Mucosa of descending colon (tissue), 3 donors: ENCODE measurements at regions of chr1 and their contacts with region 1.

Region 1: DNA sequence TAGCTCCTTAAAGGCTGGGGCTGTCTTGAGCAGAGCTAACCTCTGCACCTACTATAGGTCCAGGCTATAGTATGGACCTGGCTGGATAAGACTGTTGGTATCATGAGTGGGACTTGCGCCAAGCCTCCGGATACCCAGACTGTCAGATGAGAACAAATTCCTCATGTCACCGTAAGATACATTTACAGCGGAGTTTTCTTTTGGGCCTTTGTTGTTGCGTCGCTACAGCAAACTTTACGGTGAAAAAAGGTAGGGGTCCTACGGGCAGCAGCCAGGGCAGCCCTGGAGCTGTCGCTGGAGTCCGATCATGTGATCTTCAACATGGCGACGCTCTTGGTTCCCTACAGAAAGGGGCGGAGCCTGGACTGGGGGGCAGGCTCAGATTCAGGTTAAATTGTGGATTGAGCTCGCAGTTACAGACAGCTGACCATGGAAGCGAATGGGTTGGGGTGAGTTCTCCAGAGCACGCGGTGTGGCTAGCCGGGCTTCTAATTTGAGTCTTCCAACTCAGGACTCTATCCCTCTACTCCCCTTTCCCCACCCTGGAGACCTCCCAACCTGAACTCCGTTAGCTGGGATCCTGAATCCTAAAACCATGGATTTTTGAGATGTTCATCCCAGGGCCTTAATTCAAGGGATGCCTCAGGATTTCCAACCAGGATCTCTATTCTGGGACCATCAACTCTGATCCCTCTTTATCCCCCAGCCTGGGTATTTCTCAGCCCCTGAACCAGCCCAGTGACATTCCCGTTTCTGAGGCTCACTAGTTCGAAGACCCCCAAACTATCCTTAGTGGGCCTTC is at the start of gene UROD:
- DNase-seq: peak; percentile 93 to 97 (median 93)
- ATAC-seq: peak; percentile 84
- H3K4me3 ChIP-seq: peak within 1 kb of the TSS; percentile 94
- H3K4me1 ChIP-seq: peaks cover 30% of the 10 kb centered on the region
- CTCF ChIP-seq: no peak
- total RNA-seq, gene UROD: 44.8 to 69.8 (median 51.3) TPM

Region 2: DNA sequence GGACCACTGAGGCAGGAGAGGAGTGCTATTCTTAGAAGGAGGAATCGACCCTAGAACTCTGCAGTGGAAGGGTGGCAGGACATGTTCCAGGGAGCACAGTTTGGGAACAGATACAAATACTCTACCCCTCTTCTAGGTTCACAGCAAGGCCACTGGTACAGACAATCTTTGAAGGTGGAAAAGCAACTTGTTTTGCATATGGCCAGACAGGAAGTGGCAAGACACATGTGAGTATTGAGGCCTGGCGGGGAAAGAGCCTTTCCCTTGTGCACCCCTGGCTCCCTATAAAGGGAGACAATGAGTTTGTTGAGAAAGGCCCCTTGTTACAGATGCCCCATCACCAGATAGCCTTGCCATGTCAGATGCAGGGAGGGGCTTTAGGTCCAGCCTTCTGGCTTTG is 254.6 kb before region 1 on chr1:
- intact Hi-C with region 1: no loop called
- DNase-seq: no peak
- ATAC-seq: no peak
- H3K4me3 ChIP-seq: no peak overlapping the region
- H3K4me1 ChIP-seq: no peaks in the 10 kb centered on the region
- CTCF ChIP-seq: no peak

Region 3: DNA sequence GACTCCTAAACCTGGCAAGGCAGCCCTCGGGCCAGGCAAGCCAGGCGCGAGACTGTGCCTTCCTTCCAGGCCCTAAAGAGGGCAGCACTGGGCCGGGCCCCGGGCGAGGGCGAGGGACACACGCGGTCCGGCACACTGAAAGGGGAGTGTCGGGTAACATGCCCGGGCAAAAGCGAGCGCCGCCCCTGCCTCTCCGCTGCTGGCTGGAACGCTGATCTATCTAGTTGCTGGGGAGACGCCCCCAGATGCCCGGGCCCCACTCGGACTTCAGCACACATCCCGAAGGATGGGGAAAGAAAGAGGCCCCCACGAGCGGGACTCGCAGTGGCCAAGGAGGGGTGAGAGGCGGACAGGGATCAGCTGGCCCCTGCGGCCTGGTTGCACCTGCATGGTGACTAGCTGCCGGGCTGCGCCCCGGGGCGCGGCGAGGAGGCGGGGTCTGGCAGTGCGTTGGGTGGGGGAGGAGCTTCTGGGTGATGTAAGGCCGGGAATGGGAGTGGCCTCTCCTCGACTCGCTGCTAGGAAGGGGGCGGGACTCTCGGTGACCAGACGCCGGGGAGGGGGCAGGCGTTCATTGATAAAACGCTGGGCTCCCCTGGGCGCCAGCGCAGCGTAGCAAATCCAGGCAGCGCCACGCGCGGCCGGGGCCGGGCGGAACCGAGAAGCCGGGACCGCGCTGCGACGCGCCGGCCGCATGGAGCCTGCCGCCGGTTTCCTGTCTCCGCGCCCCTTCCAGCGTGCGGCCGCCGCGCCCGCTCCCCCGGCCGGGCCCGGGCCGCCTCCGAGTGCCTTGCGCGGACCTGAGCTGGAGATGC is 212.1 kb before region 1 on chr1 and contains the start of gene PLK3:
- intact Hi-C with region 1: loop called in 1 of 2 experiments (anchors 10 kb)
- DNase-seq: peak; percentile 98 to 99 (median 99)
- ATAC-seq: peak; percentile 96
- H3K4me3 ChIP-seq: peak within 1 kb of the TSS; percentile 57
- H3K4me1 ChIP-seq: peaks cover 11% of the 10 kb centered on the region
- CTCF ChIP-seq: peak; percentile 98
- total RNA-seq, gene PLK3: 6.4 to 14.5 (median 12.0) TPM

Region 4: GRCh38 chr1:45230540-45230939 is 218.5 kb after region 1 on chr1:
- intact Hi-C with region 1: loop called in 1 of 2 experiments (anchors 5 kb)
- DNase-seq: peak in 2 of 3 donors; percentile 49 to 51
- ATAC-seq: peak; percentile 80
- H3K4me3 ChIP-seq: no peak overlapping the region
- H3K4me1 ChIP-seq: no peaks in the 10 kb centered on the region
- CTCF ChIP-seq: peak; percentile 21

Region 5: DNA sequence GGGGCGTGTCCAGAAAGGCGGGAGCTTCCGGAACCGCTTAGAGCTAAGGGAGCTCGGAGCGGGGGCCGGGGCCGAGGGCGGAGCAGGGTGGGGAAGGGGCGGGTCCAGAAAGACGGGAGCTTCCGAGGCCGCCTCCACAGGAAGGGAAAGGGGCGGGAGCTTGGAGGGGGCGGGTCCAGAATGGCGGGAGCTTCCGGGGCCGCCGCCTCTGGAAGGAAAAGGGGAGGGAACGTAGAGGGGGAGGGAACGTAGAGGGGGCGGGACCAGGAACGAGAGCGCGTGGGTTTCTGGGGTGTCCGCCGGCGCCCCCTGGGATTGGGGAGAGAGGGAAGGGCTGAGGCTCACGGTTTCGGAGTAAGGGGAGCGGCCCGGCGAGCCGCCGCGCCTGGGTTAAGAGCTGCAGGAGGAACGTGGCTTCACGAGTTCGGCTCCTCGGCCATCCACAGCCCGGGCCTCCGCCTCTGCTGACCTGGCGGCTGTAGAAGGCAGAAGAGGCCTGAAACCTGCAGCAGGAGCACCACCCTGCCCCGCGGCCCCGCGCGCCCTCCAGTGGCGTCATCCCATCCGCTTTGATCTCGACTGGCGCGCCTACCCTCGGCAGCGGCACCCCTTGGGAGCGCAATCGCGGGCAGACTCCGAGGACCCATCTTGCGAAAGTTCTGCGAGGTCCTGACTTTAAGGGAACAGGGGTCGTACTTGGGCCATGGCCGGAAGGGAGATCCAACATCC is 291.7 kb after region 1 on chr1:
- intact Hi-C with region 1: loop called (anchors 2 to 5 kb)
- DNase-seq: peak; percentile 99 to 100 (median 99)
- ATAC-seq: peak; percentile 96
- H3K4me3 ChIP-seq: peak overlapping the region; percentile 49
- H3K4me1 ChIP-seq: peaks cover 11% of the 10 kb centered on the region
- CTCF ChIP-seq: peak; percentile 61